Cardiac septum (tissue), 1 donor: ENCODE measurements at regions of chr7 and their contacts with region 1.

Region 1: DNA sequence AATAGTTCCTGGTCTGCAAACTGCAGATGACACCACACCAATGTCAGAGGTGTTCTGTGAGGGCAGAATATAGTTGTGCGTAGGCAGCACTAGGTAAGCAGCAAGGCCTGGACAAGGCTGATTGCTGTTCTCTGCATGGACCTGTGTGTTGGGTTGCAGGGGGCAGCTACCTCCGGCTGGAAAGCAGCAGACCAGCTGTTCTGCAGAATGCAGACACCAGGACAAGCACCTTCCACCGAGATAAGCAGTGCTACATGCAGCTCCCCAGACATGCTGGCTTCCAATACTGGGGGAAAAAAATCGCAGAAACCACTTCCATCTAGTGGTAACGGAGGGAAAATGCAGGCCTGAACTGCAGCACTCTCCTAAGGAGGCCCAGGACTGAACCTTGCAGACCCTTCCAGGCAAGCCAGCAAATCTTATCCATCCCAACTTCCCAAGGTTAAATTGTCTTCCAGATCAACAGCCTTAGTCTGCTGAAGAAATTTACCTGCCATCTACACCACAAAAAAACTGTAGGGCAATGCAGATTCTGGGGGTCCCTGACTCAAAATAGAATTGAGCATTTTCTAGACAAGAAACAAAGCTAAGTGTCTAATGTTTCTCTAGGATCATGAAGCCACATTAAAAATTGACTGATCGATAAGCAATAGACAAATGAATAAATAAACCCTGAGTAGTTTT is 50.5 kb upstream of the COBL start:
- DNase-seq: no peak

Region 2: GRCh38 chr7:50092579-50093491 is 1274.2 kb before region 1 on chr7 and contains the start of gene ZPBP:
- intact Hi-C with region 1: loop called (anchors 10 kb)
- DNase-seq: no peak
- total RNA-seq, gene ZPBP: not detected

Region 3: GRCh38 chr7:51151455-51151854 is 215.6 kb before region 1 on chr7:
- intact Hi-C with region 1: no loop called
- DNase-seq: no peak

Region 4: DNA sequence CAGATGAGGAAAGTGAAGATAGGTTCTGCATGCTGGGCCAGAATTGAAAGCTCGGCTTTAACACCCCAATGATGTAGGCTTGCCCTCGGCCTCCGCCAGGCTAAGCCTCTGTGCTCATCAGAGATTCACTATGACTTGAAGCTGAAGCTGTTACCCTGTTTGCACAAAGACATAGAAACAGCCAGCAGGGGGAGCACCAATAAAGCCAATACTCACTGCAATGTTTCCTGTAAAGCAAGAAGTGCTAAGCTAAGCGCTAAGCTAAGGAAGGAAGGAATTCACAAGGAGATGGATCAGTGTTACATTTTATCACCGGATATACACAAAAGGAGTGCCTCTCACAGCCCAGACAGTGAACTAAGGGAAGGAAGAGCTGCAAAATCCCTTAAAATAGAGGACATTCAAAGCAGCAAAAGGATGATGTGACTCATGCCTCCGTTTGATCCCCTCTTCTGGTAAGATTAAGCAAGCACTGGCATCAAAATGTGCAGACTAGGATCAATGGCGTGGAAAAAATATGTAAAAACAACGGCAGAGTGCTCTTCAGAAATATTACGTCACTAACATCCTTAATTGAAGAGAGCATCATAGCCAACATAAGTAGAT is 204.2 kb before region 1 on chr7:
- intact Hi-C with region 1: loop called (anchors 2 kb)
- DNase-seq: no peak